Calu3 (cell line): ENCODE measurements at regions of chr16 and their contacts with region 1.

Region 1: GRCh38 chr16:17476414-17477270 is 5.9 kb upstream of the XYLT1 start:
- DNase-seq: peak; percentile 65
- H3K4me3 Mint-ChIP-seq: no peak overlapping the region
- H3K27ac Mint-ChIP-seq: no peak overlapping the region
- H3K4me1 Mint-ChIP-seq: no peaks in the 10 kb centered on the region
- H3K27me3 Mint-ChIP-seq: peaks cover 68% of the 10 kb centered on the region
- CTCF ChIP-seq: peak; percentile 9

Region 2: DNA sequence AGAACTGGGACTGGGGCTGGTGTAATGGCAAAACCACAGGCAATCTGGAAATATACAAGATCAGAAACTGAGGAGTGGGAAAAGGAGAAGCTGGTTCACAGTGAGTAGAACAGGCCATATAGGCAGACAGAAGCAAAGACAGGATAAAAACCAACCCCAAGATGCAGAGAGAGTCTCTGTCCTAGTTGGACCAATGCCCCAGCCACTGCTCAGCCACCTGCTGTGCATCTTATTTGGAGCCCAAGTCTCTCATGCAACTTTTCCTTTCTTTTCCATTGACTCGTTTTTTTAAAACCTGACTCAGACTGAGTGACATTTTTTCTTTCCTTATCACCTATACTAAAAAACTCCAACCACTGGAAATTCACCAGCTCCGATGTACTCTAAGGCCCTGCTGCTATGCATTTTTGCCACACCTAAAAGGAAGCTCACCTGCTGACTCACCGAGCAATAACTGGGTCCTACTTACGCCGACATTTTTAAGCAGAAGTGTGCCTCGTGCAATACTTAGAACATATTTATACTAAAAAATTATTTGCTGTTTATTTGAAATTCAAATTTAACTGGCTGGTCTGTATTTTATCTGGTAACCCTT is 95.0 kb after region 1 on chr16:
- CTCF ChIA-PET with region 1: interaction called, 10 read pairs
- intact Hi-C with region 1: loop called (anchors 5 kb)
- DNase-seq: peak; percentile 39
- H3K4me3 Mint-ChIP-seq: peak overlapping the region; percentile 30
- H3K27ac Mint-ChIP-seq: peak overlapping the region; percentile 70
- H3K4me1 Mint-ChIP-seq: peaks cover 23% of the 10 kb centered on the region
- H3K27me3 Mint-ChIP-seq: no peaks in the 10 kb centered on the region
- CTCF ChIP-seq: no peak